Tibial artery (tissue), 4 donors: ENCODE measurements at regions of chr14 and their contacts with region 1.

Region 1: DNA sequence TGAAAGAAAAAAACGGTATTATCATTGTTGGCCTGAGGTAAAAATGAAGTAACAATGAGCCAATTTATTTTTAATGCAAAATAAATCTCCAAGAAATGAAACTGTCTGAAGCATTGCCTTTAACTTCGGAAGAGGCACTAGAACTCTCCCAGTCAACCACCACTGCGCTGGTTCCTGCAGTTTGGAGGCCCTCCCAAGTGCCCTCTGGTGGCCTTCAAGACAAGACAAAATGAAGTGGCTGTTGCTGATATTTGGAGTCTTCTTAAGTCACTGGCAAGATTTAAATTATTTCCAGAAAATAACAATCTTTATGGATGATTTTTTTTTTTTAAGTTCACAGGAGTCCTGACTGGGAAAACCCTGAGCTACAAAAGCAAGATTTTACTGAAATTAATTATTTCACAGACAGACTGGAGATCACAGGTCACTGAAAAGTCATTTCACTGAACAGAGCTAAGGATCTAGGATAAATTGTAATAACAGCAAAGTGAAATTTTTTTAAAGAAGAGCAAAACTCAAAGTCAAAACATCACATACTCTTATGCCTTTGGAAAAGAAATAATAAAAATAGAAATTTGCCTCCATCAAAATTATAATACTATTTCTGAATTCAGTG is 58.2 kb downstream of the DICER1 start:
- DNase-seq: peak; percentile 65 to 75
- H3K4me3 ChIP-seq: no peak overlapping the region
- H3K27ac ChIP-seq: no peak overlapping the region
- H3K4me1 ChIP-seq: peaks cover 0 to 44% (median 13%) of the 10 kb centered on the region in 4 donors
- H3K27me3 ChIP-seq: no peaks in the 10 kb centered on the region
- CTCF ChIP-seq: peak; percentile 64 to 70

Region 2: DNA sequence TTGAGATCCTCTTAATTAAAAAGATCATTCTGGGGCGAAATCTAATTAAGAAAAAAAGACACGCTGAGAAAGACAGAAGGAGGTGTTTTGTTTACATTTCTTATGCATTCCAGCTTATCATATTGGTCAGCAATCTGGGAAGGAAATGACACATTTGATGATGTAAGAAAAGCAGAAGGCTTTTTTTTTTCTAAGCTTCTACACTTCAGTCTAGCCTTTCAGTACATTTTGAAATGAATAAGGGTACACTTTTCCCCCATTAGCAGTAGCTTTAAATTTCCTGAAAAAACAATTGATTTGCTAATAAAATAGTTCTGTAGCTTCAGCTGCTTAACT is 323.3 kb before region 1 on chr14:
- intact Hi-C with region 1: loop called (anchors 5 kb)
- DNase-seq: no peak
- H3K4me3 ChIP-seq: no peak overlapping the region
- H3K27ac ChIP-seq: no peak overlapping the region
- H3K4me1 ChIP-seq: no peaks in the 10 kb centered on the region
- H3K27me3 ChIP-seq: peaks cover 3 to 79% of the 10 kb centered on the region in 2 donors
- CTCF ChIP-seq: no peak

Region 3: DNA sequence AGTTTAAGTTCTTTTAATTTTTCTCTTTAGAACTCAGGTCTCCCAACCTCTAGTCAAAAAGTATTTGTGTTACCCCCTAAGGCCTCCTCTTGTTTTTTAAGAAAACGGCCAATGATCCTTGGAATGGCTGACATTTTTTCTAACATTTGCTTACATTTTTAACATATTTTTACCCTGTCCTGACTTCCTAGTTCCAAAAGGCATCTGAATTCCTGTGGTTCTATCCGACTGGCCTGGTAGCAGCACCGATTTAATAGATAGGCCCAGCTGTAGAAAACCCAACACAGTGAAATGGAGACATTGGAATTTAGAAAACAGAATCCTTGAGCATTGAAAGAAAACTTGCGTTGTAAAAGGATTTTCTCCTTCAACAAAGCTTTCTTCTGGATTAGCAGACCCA is 194.5 kb before region 1 on chr14:
- intact Hi-C with region 1: loop called (anchors 10 kb)
- DNase-seq: no peak
- H3K4me3 ChIP-seq: no peak overlapping the region
- H3K27ac ChIP-seq: no peak overlapping the region
- H3K4me1 ChIP-seq: peaks cover 0 to 12% (median 1%) of the 10 kb centered on the region in 4 donors
- H3K27me3 ChIP-seq: no peaks in the 10 kb centered on the region
- CTCF ChIP-seq: no peak

Region 4: DNA sequence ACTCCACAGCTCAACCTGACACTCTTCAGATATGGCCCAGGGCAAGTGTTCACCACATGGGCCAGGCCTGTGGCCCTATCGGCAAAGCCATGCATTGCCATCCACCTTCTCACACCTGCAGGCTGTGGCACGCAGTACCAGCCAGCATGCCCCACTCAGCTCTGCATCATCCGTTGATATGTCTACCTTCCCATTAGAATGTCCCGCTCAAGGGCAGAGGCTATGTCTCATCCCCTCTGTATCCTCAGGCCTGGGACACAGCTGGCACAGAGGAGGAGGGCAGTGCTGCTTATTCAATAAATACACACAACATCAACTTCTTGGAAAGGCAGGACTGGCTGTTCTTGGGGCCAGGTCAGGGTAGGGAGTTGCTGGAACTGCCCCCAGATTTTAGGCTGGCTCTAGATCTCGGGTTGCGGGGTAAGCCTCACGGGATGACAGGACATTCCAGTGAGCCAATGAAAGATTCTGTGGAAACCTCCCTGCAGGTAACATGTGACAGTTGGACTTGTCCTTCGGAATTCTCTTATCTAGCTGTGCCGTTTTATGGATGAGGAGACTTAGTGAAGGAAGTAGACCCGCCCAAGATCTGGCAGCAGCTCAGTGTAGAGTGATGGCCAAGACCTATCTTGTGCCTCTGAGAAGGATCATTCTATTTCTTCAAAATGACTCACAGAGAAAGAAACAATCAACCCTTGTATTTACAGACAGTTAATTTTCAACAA is 391.8 kb after region 1 on chr14:
- intact Hi-C with region 1: no loop called
- DNase-seq: peak in 1 of 2 donors; percentile 75
- H3K4me3 ChIP-seq: no peak overlapping the region
- H3K27ac ChIP-seq: peak overlapping the region; percentile 81 to 84
- H3K4me1 ChIP-seq: peaks cover 0 to 55% (median 36%) of the 10 kb centered on the region in 4 donors
- H3K27me3 ChIP-seq: no peaks in the 10 kb centered on the region
- CTCF ChIP-seq: no peak